Ascending aorta (tissue), 2 donors: ENCODE measurements at regions of chr7 and their contacts with region 1.

Region 1: GRCh38 chr7:44103923-44104859 is at the start of gene AEBP1:
- DNase-seq: no peak
- H3K4me3 ChIP-seq: peak within 1 kb of the TSS; percentile 63 to 88
- H3K27ac ChIP-seq: peak within 1 kb of the TSS; percentile 99 to 100
- H3K4me1 ChIP-seq: peaks cover 58 to 78% of the 10 kb centered on the region in 2 donors
- H3K27me3 ChIP-seq: no peaks in the 10 kb centered on the region
- CTCF ChIP-seq: no peak
- total RNA-seq, gene AEBP1: 1,349 TPM

Region 2: GRCh38 chr7:43729214-43729923 is 374.8 kb before region 1 on chr7 and contains the start of gene COA1:
- intact Hi-C with region 1: no loop called
- DNase-seq: peak; percentile 46 to 92
- H3K4me3 ChIP-seq: peak within 1 kb of the TSS; percentile 73 to 82
- H3K27ac ChIP-seq: peak within 1 kb of the TSS; percentile 69 to 88
- H3K4me1 ChIP-seq: peaks cover 9 to 10% of the 10 kb centered on the region in 2 donors
- H3K27me3 ChIP-seq: no peaks in the 10 kb centered on the region
- CTCF ChIP-seq: peak in 2 of 3 experiments; percentile 13 to 17
- total RNA-seq, gene COA1: 16.3 TPM

Region 3: DNA sequence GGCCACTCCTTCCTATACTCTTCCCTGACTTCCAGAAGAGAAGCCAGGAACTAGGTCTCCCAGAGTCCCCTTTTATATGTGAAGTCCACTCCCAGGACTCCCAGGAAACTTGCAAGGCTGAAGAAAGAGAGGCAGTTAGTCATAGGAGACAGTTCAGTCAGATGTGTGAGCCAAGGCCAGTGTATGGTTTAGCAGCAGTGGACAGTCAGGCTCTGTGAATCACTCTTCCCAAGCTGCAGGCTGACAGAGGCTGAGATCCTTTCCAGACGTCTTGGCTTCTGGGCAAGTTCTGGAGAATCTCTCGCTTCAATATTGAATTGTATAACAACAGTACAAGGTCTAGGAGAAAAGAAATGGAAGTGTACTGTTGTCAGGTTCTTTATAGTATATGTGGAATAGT is 318.8 kb before region 1 on chr7:
- intact Hi-C with region 1: no loop called
- DNase-seq: peak in 1 of 2 donors; percentile 55
- H3K4me3 ChIP-seq: no peak overlapping the region
- H3K27ac ChIP-seq: no peak overlapping the region
- H3K4me1 ChIP-seq: no peaks in the 10 kb centered on the region
- H3K27me3 ChIP-seq: no peaks in the 10 kb centered on the region
- CTCF ChIP-seq: no peak

Region 4: DNA sequence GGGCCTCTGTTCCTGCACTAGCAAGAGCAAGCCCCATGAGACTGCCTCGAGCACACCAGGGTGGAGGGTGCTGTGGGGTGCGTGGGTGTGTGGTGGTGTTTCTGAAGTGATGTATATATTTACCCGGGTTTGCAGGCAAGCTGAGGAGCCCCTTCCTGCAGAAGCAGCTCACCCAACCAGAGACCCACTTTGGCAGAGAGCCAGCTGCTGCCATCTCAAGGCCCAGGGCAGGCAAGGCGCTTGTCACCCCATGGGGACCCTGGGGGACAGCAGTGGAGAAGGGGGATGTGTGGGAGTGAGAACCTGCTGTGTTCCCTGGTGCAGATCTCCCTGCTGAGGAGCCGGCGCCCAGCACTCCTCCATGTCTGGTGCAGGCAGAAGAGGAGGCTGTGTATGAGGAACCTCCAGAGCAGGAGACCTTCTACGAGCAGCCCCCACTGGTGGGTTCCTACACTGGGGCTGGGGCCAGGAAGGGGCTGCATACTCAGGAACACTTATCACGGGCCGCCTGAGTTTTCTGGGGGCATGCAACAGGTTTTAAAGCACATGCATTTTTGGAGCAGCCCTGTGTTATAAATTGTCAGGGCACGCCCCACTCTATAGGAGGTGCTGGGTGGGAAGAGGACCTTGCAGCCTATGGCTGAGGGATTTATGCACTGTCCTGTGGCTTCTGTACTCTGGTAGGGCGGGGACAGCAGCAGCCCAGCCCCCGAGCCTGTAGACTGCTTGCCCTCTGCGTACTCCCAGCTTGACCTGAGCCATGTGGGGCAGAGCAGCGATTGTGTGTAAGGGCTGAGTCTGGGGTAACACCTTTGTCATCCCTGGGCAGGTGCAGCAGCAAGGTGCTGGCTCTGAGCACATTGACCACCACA is 44.7 kb before region 1 on chr7:
- intact Hi-C with region 1: no loop called
- DNase-seq: peak in 1 of 2 donors; percentile 67
- H3K4me3 ChIP-seq: no peak overlapping the region
- H3K27ac ChIP-seq: no peak overlapping the region
- H3K4me1 ChIP-seq: peaks cover 0 to 1% of the 10 kb centered on the region in 2 donors
- H3K27me3 ChIP-seq: no peaks in the 10 kb centered on the region
- CTCF ChIP-seq: no peak

Region 5: GRCh38 chr7:44072364-44073231 is 31.6 kb before region 1 on chr7:
- intact Hi-C with region 1: loop called (anchors 1 kb)
- DNase-seq: peak; percentile 64 to 96
- H3K4me3 ChIP-seq: peak overlapping the region in 1 of 2 donors; percentile 34
- H3K27ac ChIP-seq: peak overlapping the region; percentile 70 to 71
- H3K4me1 ChIP-seq: peaks cover 21 to 24% of the 10 kb centered on the region in 2 donors
- H3K27me3 ChIP-seq: no peaks in the 10 kb centered on the region
- CTCF ChIP-seq: peak; percentile 57 to 81 (median 74)

Region 6: GRCh38 chr7:44082541-44083207 is 21.5 kb before region 1 on chr7:
- intact Hi-C with region 1: loop called (anchors 1 kb)
- DNase-seq: peak; percentile 98 to 100
- H3K4me3 ChIP-seq: peak overlapping the region; percentile 66 to 84
- H3K27ac ChIP-seq: peak overlapping the region; percentile 91 to 100
- H3K4me1 ChIP-seq: peaks cover 18 to 56% of the 10 kb centered on the region in 2 donors
- H3K27me3 ChIP-seq: no peaks in the 10 kb centered on the region
- CTCF ChIP-seq: no peak

Region 7: GRCh38 chr7:44087911-44088838 is 16.0 kb before region 1 on chr7:
- intact Hi-C with region 1: loop called (anchors 1 kb)
- DNase-seq: peak; percentile 67 to 94
- H3K4me3 ChIP-seq: peak overlapping the region in 1 of 2 donors; percentile 9
- H3K27ac ChIP-seq: peak overlapping the region; percentile 91 to 100
- H3K4me1 ChIP-seq: peaks cover 34 to 73% of the 10 kb centered on the region in 2 donors
- H3K27me3 ChIP-seq: no peaks in the 10 kb centered on the region
- CTCF ChIP-seq: no peak